AG04449 (cell line): ENCODE measurements at regions of chr12 and their contacts with region 1.

Region 1: GRCh38 chr12:90909069-90909770 is 45.8 kb downstream of the CCER1 start:
- DNase-seq: no peak
- H3K4me3 ChIP-seq: no peak overlapping the region
- CTCF ChIP-seq: peak; percentile 54

Region 2: DNA sequence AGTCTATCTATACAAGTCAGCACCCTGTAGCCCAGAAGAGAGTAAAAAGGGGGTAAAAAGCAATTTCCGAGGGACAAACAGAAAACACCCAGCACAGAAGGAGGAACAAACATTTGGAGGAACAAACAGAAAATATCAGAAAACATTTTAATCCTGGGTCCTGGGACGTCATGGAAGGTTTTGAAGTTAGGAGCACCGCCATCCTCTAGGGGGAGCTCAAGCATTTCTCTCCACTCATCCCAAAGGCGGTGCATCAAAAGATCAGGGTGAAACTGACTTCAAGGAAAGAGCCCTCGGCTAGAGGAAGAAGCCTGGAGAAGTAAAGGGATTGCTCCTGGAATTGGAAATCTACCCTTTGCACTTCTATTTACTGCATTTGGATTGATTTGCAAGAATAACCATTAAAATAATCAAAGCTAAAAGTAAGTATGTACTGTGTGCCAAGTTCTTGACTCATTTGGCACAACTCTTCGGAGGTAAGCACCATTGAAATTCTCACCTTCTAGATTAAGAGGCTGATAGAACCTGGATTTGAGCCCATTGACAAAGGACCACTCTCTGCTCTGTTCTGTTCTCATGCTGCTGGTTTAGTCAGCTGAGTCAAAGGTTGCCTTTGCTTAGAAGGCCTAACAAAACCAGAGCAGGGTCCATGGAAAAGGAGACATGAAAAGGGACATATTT is 1366.2 kb before region 1 on chr12:
- CTCF ChIA-PET with region 1: interaction called, 15 read pairs
- POLR2A ChIA-PET with region 1: no interaction called
- DNase-seq: no peak
- H3K4me3 ChIP-seq: no peak overlapping the region
- CTCF ChIP-seq: peak; percentile 77

Region 3: GRCh38 chr12:90630006-90630405 is 279.2 kb before region 1 on chr12:
- CTCF ChIA-PET with region 1: no interaction called
- POLR2A ChIA-PET with region 1: no interaction called
- DNase-seq: no peak
- H3K4me3 ChIP-seq: no peak overlapping the region
- CTCF ChIP-seq: no peak

Region 4: GRCh38 chr12:90922145-90922627 is 13.0 kb after region 1 on chr12:
- CTCF ChIA-PET with region 1: interaction called, 24 read pairs
- POLR2A ChIA-PET with region 1: no interaction called
- DNase-seq: no peak
- H3K4me3 ChIP-seq: no peak overlapping the region
- CTCF ChIP-seq: no peak